ENCODE measurements at regions of chr14 and their contacts with region 1.

Region 1: DNA sequence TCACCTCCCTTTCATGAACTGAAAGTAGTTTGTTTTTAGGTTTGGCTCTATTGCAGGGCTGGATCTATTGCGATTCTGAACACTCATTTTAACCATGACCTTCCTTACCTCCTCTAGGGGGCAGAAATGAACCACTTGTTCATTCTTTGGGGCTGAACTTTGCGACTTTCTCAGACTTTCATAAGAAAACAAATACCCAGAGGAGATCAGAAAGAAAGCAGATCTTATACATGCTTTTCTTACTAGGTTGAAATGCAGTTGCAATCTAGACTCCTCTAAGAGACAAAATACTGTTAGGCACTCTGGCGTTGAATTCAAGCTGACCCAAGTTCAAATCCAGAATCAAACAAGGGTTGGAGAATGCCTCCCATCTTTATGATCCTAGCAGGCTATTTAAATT is 32.6 kb upstream of the PLEKHG3 start:
- DNase-seq: no peak
- H3K4me3 ChIP-seq: no peak overlapping the region
- H3K27ac ChIP-seq: no peak overlapping the region
- H3K4me1 ChIP-seq: peaks cover 0 to 5% (median 2%) of the 10 kb centered on the region in 4 donors
- H3K27me3 ChIP-seq: no peaks in the 10 kb centered on the region
- CTCF ChIP-seq: peak; percentile 66 to 80 (median 75)
- EP300 ChIP-seq: no peak
- POLR2A ChIP-seq: no peak

Region 2: GRCh38 chr14:64584190-64584589 is 87.4 kb before region 1 on chr14:
- intact Hi-C with region 1: no loop called
- DNase-seq: no peak
- H3K4me3 ChIP-seq: no peak overlapping the region
- H3K27ac ChIP-seq: peak overlapping the region; percentile 27 to 71 (median 60)
- H3K4me1 ChIP-seq: peaks cover 3 to 31% (median 16%) of the 10 kb centered on the region in 4 donors
- H3K27me3 ChIP-seq: no peaks in the 10 kb centered on the region
- CTCF ChIP-seq: no peak
- EP300 ChIP-seq: no peak
- POLR2A ChIP-seq: no peak

Region 3: DNA sequence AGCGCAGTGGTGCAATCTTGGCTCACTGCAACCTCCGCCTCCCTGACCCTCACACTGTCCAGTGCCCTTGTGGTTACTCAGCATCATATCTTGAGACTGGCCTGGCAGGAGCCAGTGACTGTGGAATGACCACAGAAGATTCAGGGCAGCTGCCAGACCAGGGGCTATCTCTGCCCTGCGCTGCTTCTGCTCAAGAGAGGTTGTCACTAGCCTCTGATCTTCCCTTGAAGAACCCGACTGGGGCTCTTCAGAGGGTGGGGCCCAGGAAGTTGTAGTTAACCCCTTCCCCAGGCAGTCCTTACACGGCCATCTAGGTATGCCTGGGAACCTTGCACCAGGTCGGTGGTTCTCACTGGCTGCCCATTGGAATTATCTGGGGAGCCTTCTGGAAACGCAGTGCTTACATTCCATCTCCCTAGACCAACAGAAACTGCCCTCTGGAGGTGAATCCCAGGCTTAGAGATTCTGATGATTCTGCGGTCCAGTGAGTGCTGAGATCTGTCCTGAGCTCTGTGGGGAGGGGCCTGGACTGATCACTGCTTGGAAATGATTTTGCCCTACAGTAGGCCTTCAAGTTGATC is 74.0 kb after region 1 on chr14:
- intact Hi-C with region 1: loop called (anchors 5 kb)
- DNase-seq: no peak
- H3K4me3 ChIP-seq: no peak overlapping the region
- H3K27ac ChIP-seq: peak overlapping the region; percentile 19 to 47 (median 40)
- H3K4me1 ChIP-seq: peaks cover 15 to 20% (median 17%) of the 10 kb centered on the region in 4 donors
- H3K27me3 ChIP-seq: no peaks in the 10 kb centered on the region
- CTCF ChIP-seq: peak; percentile 21 to 46 (median 45)
- EP300 ChIP-seq: no peak
- POLR2A ChIP-seq: no peak

Region 4: GRCh38 chr14:64764641-64765520 is 93.3 kb after region 1 on chr14:
- intact Hi-C with region 1: loop called (anchors 1 kb)
- DNase-seq: no peak
- H3K4me3 ChIP-seq: peak overlapping the region; percentile 32 to 55 (median 42)
- H3K27ac ChIP-seq: peak overlapping the region in 3 of 4 donors; percentile 47 to 52 (median 48)
- H3K4me1 ChIP-seq: peaks cover 25 to 43% (median 40%) of the 10 kb centered on the region in 4 donors
- H3K27me3 ChIP-seq: no peaks in the 10 kb centered on the region
- CTCF ChIP-seq: peak; percentile 81 to 95 (median 95)
- EP300 ChIP-seq: no peak
- POLR2A ChIP-seq: no peak

Region 5: GRCh38 chr14:64788668-64789067 is 117.1 kb after region 1 on chr14:
- intact Hi-C with region 1: no loop called
- DNase-seq: no peak
- H3K4me3 ChIP-seq: no peak overlapping the region
- H3K27ac ChIP-seq: no peak overlapping the region
- H3K4me1 ChIP-seq: peaks cover 0 to 6% (median 3%) of the 10 kb centered on the region in 4 donors
- H3K27me3 ChIP-seq: no peaks in the 10 kb centered on the region
- CTCF ChIP-seq: no peak
- EP300 ChIP-seq: no peak
- POLR2A ChIP-seq: no peak

Measured in esophagus muscularis mucosa (tissue), 4 donors.